Activated CD4-positive, alpha-beta T cell treated with anti-CD3 and anti-CD28 coated beads, Interleukin-2, amount 10 ng/mL, durations not matched to agents 24 days and 14 days (primary cell): ENCODE measurements at regions of chr10 and their contacts with region 1.

Region 1: DNA sequence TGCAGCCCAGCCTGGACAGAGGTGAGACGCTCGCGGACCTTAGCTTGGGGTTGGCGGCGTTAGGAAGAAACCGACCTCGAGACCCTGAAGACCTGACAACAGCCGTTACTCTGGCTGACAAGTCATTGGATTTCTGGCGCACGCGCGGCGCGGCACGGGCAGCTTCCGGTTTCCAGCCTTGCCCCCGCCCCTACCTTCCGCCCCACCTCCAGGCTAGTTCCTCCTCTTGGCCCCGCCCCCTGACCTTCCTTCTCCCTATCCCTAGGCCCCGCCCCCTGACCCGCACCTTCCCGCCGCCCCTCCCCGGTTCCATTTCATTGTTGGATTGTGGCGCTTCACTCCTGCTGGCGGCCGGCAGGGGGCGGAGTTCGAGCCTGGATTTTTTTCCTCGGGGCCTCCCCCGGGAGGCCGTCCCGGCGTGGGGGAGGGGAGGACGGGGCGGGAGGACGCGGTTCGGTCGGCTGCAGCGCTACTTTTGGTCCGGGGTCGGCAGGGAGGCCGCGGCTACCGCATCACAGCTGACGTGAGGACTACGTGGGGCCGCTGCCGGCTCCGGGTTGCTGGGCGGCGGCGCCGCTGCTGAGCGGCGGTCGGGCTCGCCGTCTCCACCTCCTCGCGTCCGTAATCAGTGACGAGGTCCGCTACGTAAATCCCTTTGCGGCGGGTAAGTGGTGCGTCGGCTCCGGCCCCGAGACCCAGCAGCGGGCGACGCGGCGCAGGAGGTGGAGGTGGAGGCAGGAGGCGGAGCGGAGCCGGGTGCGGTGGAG is at the start of gene CREM:
- DNase-seq: peak; percentile 99
- H3K4me3 Mint-ChIP-seq: peak within 1 kb of the TSS; percentile 99
- H3K27ac Mint-ChIP-seq: peak within 1 kb of the TSS; percentile 99
- H3K4me1 Mint-ChIP-seq: peaks cover 46% of the 10 kb centered on the region
- H3K27me3 Mint-ChIP-seq: no peaks in the 10 kb centered on the region
- total RNA-seq, gene CREM: 87.0 and 87.8 TPM in 2 replicates

Region 2: GRCh38 chr10:35090162-35090954 is 36.4 kb before region 1 on chr10 and contains the start of gene CUL2:
- intact Hi-C with region 1: loop called (anchors 1 kb)
- DNase-seq: peak; percentile 98
- H3K4me3 Mint-ChIP-seq: peak within 1 kb of the TSS; percentile 84
- H3K27ac Mint-ChIP-seq: peak within 1 kb of the TSS; percentile 97
- H3K4me1 Mint-ChIP-seq: peaks cover 40% of the 10 kb centered on the region
- H3K27me3 Mint-ChIP-seq: peaks cover 5% of the 10 kb centered on the region
- total RNA-seq, gene CUL2: 50.2 and 50.4 TPM in 2 replicates

Region 3: GRCh38 chr10:35140727-35141126 is 14.0 kb after region 1 on chr10:
- intact Hi-C with region 1: no loop called
- DNase-seq: no peak
- H3K4me3 Mint-ChIP-seq: no peak overlapping the region
- H3K27ac Mint-ChIP-seq: no peak overlapping the region
- H3K4me1 Mint-ChIP-seq: peaks cover 29% of the 10 kb centered on the region
- H3K27me3 Mint-ChIP-seq: no peaks in the 10 kb centered on the region

Region 4: GRCh38 chr10:35153716-35154479 is 27.2 kb after region 1 on chr10:
- intact Hi-C with region 1: loop called (anchors 1 kb)
- DNase-seq: no peak
- H3K4me3 Mint-ChIP-seq: no peak overlapping the region
- H3K27ac Mint-ChIP-seq: no peak overlapping the region
- H3K4me1 Mint-ChIP-seq: peaks cover 37% of the 10 kb centered on the region
- H3K27me3 Mint-ChIP-seq: no peaks in the 10 kb centered on the region

Region 5: DNA sequence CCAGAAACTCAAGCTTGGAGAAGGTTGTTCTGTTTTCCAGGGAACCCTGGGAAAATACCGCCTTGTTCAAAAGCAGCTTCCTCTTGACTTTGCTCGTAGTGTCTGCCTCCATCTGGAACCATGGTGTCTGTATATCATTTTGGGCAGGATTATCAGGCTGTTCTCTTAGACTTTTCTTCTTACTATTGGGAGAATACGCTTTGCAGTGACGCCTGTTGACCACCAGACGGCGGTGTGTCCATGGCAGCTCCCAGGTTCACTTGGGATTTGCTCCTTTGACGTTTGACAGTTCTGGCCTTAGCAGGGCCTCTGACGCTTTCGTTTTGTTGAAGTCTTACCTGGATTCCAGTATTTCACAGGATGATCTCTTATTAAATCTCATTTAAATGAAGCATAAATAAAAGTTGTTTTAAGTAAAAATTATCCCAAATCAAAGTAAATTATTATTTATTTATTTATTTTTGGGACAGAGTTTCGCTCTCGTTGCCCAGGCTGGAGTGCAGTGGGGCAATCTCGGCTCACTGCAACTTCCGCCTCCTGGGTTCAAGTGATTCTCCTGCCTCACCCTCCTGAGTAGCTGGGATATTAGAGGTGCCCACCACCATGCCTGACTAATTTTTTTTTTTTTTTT is 436.7 kb after region 1 on chr10:
- intact Hi-C with region 1: loop called (anchors 10 kb)
- DNase-seq: peak; percentile 81
- H3K4me3 Mint-ChIP-seq: no peak overlapping the region
- H3K27ac Mint-ChIP-seq: peak overlapping the region; percentile 66
- H3K4me1 Mint-ChIP-seq: peaks cover 10% of the 10 kb centered on the region
- H3K27me3 Mint-ChIP-seq: no peaks in the 10 kb centered on the region

Region 6: DNA sequence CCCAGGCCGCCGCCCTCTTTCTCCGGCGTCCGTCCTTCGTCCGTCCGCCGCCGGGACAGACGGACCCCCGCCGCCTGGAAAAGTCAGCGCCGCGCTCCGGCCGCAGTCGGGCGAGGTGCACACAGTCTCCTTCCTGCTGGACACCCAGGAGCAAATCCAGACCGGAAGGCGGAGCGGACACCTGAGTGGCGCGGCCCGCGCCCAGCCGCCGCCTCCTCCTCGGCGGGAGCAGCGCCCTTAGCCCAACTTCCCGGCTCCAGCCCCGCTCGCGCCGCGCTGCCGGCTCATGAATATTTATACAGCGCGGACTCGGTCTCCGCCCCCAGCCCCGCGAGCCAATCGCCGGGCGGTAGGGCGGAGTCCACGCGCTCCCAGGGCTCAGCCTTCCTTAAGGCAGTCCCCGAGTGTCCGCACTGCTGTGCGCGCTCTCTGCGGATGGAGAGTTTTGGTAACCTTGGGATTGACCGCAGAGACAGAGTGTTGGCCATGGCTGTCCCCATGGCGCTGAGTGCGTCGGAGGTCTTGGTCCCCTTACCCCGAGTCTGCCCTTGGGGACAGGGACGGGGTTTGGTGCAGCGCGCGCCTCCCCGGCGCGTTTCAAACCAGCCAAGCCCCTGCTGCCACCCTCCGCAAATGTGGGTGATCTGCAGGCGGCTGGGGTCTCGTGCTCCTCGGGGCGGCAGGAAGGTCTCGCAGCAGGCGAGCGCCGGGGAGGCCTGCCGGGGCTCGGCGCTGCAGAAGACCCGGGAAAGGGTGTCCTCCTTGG is 515.5 kb after region 1 on chr10 and contains the start of gene FZD8:
- intact Hi-C with region 1: loop called (anchors 5 kb)
- DNase-seq: peak; percentile 91
- H3K4me3 Mint-ChIP-seq: peak within 1 kb of the TSS; percentile 82
- H3K27ac Mint-ChIP-seq: no peak within 1 kb of the TSS
- H3K4me1 Mint-ChIP-seq: peaks cover 11% of the 10 kb centered on the region
- H3K27me3 Mint-ChIP-seq: peaks cover 67% of the 10 kb centered on the region
- total RNA-seq, gene FZD8: 0.38 and 0.56 TPM in 2 replicates